Motor neuron (in vitro differentiated cells): ENCODE measurements at regions of chr19 and their contacts with region 1.

Region 1: DNA sequence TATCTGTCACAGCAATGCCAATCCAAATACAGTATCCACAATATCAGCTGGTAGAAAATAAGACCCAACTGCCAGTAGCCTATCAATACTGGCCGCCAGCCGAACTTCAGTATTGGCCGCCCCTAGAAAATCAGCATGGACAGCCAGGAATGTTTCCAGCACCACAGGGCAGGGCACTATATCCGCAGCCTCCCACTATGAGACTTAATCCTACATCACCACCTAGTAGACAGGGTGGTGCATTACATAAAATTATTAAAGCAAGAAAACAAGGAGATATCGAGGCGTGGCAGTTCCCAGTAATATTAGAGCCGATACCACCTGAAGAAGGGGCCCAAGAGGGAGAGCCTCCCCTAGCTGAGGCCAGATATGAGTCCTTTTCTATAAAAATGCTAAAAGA is 111.3 kb downstream of the ZNF486 start:
- ATAC-seq: peak in 4 of 8 experiments; percentile 47 to 94 (median 67)
- H3K4me3 ChIP-seq: no peak overlapping the region
- H3K27ac ChIP-seq: no peak overlapping the region
- H3K4me1 ChIP-seq: no peaks in the 10 kb centered on the region

Region 2: GRCh38 chr19:19943848-19944582 is 334.3 kb before region 1 on chr19:
- in situ Hi-C with region 1: no loop called
- ATAC-seq: no peak
- H3K4me3 ChIP-seq: no peak overlapping the region
- H3K27ac ChIP-seq: no peak overlapping the region
- H3K4me1 ChIP-seq: no peaks in the 10 kb centered on the region

Region 3: DNA sequence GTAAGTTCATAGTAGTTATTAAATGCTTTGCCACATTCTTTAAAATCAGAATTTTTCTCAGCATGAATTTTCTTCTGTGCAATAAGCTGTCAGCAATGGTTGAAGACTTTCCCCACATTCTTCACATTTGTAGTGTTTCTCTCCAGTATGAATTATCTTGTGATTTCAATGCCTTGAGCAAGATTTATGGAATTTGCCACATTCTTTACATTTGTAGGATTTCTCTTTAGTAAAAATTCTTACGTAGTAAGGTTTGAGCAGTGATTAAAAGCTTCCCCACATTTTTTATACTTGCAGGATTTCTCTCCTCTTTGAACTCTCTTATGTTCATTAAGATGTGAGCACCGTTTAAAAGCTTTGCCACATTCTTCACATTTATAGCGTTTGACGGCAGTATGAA is 272.6 kb before region 1 on chr19:
- in situ Hi-C with region 1: loop called in 1 of 9 experiments (anchors 25 kb)
- ATAC-seq: no peak
- H3K4me3 ChIP-seq: no peak overlapping the region
- H3K27ac ChIP-seq: no peak overlapping the region
- H3K4me1 ChIP-seq: no peaks in the 10 kb centered on the region

Region 4: GRCh38 chr19:20067943-20068342 is 210.4 kb before region 1 on chr19:
- in situ Hi-C with region 1: no loop called
- ATAC-seq: no peak
- H3K4me3 ChIP-seq: no peak overlapping the region
- H3K27ac ChIP-seq: no peak overlapping the region
- H3K4me1 ChIP-seq: no peaks in the 10 kb centered on the region

Region 5: DNA sequence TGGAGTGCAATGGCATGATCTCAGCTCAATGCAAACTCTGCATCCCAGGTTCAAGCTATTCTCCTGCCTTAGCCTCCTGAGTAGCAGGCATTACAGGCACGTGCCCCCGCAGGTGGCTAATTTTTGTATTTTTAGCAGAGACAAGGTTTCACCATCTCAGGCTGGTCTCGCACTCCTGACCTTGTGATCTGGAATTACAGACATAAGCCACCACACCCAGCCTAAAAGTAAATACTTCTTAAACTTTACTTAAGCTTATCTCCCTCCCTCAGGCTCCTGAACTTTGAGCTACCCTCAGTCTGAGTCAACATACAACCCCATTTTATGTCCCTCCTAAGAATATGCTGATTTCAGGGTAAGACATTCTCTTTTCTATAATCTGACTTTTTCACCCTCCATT is 45.2 kb before region 1 on chr19:
- in situ Hi-C with region 1: no loop called
- ATAC-seq: peak in 1 of 8 experiments; percentile 31
- H3K4me3 ChIP-seq: no peak overlapping the region
- H3K27ac ChIP-seq: no peak overlapping the region
- H3K4me1 ChIP-seq: no peaks in the 10 kb centered on the region